OCI-LY7 (cell line): ENCODE measurements at regions of chr4 and their contacts with region 1.

Region 1: GRCh38 chr4:173013232-173013930 is 155.2 kb upstream of the GALNT7 start:
- DNase-seq: peak; percentile 59
- H3K4me3 ChIP-seq: no peak overlapping the region
- H3K27ac ChIP-seq: no peak overlapping the region
- H3K4me1 ChIP-seq: peaks cover 5% of the 10 kb centered on the region
- CTCF ChIP-seq: peak; percentile 92

Region 2: GRCh38 chr4:172900930-172901329 is 112.5 kb before region 1 on chr4:
- CTCF ChIA-PET with region 1: no interaction called
- POLR2A ChIA-PET with region 1: no interaction called
- intact Hi-C with region 1: no loop called
- DNase-seq: no peak
- H3K4me3 ChIP-seq: no peak overlapping the region
- H3K27ac ChIP-seq: no peak overlapping the region
- H3K4me1 ChIP-seq: no peaks in the 10 kb centered on the region
- CTCF ChIP-seq: no peak

Region 3: DNA sequence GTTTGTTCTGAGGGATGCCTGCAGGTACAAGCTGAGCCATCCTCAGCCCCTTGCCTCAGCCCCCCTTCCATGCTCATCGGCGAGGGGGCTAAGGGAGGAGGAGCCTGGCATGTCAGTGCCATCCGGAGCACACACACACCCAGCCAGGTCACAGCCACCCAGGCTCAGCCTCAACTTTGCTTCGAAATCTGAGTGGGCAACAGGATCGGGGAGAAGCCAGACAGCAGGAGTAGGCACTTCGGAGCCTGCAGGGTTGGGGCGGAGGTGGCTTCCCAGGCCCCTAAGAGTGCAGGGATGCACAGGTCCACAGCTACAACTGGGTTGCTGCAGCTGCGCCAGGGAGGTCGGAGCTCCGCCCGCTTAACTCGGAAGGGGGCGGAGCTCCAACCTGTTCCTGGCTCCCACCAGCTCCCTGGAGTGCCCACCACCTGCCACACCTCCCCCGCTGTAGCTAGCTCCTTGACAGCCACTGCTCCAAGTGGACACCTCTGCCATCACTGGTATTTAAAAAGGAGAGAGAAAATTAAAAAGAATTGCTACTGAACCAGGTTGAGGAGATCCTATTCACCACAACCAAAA is 37.6 kb before region 1 on chr4:
- CTCF ChIA-PET with region 1: no interaction called
- POLR2A ChIA-PET with region 1: no interaction called
- intact Hi-C with region 1: no loop called
- DNase-seq: no peak
- H3K4me3 ChIP-seq: no peak overlapping the region
- H3K27ac ChIP-seq: no peak overlapping the region
- H3K4me1 ChIP-seq: no peaks in the 10 kb centered on the region
- CTCF ChIP-seq: no peak

Region 4: DNA sequence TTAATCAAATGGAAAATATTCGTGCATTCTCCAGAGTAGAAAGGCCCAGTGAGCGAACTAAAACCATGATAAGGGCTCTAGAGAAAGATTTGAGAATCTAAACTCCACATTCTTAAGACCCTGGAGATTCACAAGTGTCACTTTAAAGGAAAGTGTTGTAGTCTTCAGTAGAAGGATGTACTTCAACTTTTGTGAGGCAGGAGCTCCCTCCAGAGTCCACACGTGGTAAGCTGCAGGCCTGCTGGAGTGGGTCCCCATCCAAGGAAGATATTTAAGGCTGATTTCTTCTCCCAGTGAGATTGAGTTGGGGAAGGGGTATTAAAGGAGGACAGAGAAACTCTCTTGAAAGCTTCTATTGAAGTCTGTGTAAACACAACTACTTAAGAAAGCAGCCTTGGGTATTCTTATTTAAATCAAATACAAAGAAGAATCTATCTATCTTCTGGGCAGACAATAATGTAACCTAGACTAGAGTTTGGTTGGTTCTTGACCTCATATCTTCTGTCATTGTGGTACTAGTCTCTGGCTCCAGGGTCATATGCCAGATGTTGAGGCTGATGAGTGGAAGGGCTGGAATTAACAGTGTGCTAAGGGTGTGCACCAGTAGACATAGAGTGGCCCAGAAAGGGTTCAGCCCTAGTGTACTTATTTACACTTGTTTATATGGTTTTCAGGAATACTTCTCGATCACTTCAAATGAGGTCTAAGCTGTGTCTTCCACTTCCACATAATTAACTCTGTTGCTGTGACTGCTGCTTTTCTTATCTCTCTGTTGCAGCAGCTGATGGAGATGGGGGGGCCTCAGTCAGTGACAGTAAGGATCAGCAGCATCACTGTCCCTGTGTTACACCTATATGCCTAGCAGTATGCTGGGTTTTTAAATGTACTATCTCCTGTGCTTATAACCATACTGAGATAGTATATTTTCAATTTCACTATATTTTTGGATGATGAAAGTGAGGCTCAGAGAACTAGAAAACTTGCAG is 244.6 kb after region 1 on chr4:
- CTCF ChIA-PET with region 1: interaction called, 11 read pairs
- POLR2A ChIA-PET with region 1: no interaction called
- intact Hi-C with region 1: loop called (anchors 1 kb)
- DNase-seq: peak; percentile 76
- H3K4me3 ChIP-seq: no peak overlapping the region
- H3K27ac ChIP-seq: no peak overlapping the region
- H3K4me1 ChIP-seq: peaks cover 22% of the 10 kb centered on the region
- CTCF ChIP-seq: peak; percentile 95

Region 5: DNA sequence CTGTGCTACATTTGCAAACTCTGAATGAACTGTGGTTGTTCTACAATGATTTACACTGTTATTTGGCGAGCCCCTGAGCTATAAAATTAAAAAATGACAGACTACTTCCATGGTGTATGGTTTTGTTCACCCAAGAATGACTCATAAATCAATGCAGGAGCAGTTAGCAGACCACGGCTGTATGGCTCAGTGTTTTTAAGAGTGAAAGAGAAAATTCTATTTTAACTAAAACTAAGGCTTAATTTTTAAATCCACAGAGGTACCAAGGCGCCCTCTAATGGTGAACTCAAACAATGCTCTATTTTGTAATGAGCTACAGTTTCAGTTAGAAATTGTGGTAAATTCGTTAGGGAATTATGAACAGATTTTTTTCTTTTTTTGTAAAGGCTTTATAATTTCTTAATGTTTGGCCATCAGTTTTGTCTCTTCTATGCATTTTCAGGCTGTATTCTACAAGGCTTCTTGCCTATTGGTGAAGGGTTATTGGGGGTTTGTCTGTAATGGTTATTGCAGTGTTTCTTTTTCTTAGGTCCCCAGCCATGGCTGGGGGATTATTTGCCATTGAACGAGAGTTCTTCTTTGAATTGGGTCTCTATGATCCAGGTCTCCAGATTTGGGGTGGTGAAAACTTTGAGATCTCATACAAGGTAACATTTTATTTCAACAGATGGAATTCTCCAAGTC is 288.3 kb after region 1 on chr4:
- CTCF ChIA-PET with region 1: interaction called, 18 read pairs
- POLR2A ChIA-PET with region 1: interaction called, 12 read pairs
- intact Hi-C with region 1: loop called (anchors 2 kb)
- DNase-seq: peak; percentile 53
- H3K4me3 ChIP-seq: no peak overlapping the region
- H3K27ac ChIP-seq: no peak overlapping the region
- H3K4me1 ChIP-seq: no peaks in the 10 kb centered on the region
- CTCF ChIP-seq: peak; percentile 98

Region 6: DNA sequence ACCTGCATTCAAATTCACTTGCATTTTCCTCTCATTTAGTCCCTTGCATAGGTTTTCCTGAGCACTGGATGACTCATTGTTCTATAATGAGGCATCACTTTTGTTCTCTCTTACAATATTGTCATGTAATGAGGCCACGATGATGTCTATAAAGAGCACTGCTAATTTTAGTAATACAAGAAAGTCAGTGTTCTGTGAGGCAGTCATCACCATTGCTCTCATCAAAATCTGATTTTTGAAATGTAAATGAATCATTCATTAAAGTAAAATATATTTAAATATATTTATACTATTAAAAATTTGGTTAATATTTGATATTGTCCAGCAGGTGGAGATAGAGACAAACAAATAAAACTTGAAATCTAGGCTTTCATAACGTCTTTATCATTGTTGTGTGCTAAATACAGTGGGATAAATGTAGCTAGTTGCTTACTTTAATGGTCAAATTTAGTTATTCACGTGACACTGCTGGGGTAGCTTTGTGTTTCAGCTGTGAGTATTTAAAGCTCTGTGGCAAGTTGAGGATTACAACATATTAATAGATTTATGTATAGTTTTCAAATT is 305.3 kb after region 1 on chr4:
- CTCF ChIA-PET with region 1: no interaction called
- POLR2A ChIA-PET with region 1: no interaction called
- intact Hi-C with region 1: loop called (anchors 5 kb)
- DNase-seq: peak; percentile 62
- H3K4me3 ChIP-seq: no peak overlapping the region
- H3K27ac ChIP-seq: no peak overlapping the region
- H3K4me1 ChIP-seq: peaks cover 11% of the 10 kb centered on the region
- CTCF ChIP-seq: peak; percentile 72; the same call in 1 of the 2 replicates

Region 7: GRCh38 chr4:173420324-173420752 is 407.0 kb after region 1 on chr4:
- CTCF ChIA-PET with region 1: interaction called, 5 read pairs
- POLR2A ChIA-PET with region 1: interaction called, 3 read pairs
- intact Hi-C with region 1: loop called (anchors 1 kb)
- DNase-seq: peak; percentile 35
- H3K4me3 ChIP-seq: no peak overlapping the region
- H3K27ac ChIP-seq: no peak overlapping the region
- H3K4me1 ChIP-seq: no peaks in the 10 kb centered on the region
- CTCF ChIP-seq: peak; percentile 83